HepG2 (cell line): ENCODE measurements at regions of chr1 and their contacts with region 1.

Region 1: DNA sequence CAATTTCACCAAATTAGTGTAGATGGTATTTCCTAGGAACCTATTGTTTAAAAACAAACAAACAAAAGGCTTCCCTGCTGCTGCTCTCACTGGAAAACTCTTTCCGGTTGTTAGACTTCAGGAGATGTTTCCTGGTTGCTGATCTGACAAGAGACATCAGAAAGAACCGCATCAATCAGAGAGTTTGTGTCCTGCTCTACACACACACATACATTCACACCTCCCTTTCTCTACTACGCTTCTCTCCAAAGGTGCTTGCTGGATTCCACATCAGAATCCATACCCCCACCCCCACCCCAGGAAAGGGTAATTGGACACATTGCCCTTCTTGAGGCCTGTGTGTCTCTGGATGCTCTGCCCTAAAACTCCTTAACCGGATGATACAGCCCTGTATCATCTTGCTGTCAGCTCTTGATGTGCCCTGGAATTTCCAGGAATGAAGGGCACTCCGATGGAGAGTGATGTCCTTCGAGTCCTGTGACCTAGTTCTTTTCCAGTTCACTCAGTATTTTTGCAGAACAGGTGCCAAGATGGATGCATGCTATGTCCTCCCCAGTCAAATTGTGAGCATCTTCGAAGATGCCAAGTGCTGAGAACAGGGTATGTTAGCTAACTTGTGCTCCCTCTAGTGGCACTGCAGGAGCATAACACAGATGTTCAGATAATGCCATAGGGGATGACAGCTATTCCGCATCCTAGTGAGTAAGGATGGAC is 113.7 kb upstream of the SLC35F3 start:
- DNase-seq: peak; percentile 43
- ATAC-seq: peak; percentile 92
- H3K4me3 ChIP-seq: no peak overlapping the region
- H3K27ac ChIP-seq: no peak overlapping the region
- H3K4me1 ChIP-seq: no peaks in the 10 kb centered on the region
- H3K27me3 ChIP-seq: no peaks in the 10 kb centered on the region
- CTCF ChIP-seq: peak; percentile 85
- EP300 ChIP-seq: no peak
- POLR2A ChIP-seq: no peak
- RAD21 ChIP-seq: no peak

Region 2: DNA sequence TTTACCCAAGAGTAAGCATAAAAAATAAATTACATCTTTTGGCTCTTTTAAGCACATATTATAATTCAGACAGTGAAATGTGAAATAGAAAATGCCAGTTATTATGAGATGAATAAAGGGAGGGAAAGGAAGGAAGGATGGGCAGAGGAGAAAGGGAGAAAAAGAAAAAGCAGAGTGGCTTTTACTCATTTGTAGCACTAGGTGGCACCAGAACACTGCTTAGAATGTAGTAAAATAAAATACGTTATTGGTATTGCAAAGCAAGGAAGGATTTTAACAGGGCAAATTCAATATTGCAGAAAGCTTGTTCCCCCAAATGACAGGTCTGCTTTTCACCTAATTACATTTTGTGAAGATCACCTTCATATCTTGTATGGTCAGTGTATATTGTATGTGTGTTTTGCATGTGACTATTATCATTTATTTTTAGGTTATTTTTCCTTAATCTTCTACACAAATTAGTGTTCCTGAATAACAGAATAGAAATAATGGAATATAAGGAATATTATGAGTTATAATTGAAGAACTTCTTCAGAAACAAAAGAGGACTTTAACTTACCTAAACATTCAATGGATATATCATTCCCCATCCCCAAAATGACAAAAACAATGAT is 486.2 kb before region 1 on chr1:
- CTCF ChIA-PET with region 1: no interaction called
- POLR2A ChIA-PET with region 1: no interaction called
- in situ Hi-C with region 1: no loop called
- intact Hi-C with region 1: loop called (anchors 1 kb)
- DNase-seq: no peak
- ATAC-seq: no peak
- H3K4me3 ChIP-seq: no peak overlapping the region
- H3K27ac ChIP-seq: no peak overlapping the region
- H3K4me1 ChIP-seq: no peaks in the 10 kb centered on the region
- H3K27me3 ChIP-seq: no peaks in the 10 kb centered on the region
- CTCF ChIP-seq: peak; percentile 65
- EP300 ChIP-seq: no peak
- POLR2A ChIP-seq: no peak
- RAD21 ChIP-seq: no peak

Region 3: GRCh38 chr1:233394860-233395717 is 395.7 kb before region 1 on chr1:
- CTCF ChIA-PET with region 1: no interaction called
- POLR2A ChIA-PET with region 1: no interaction called
- in situ Hi-C with region 1: no loop called
- intact Hi-C with region 1: loop called (anchors 1 kb)
- DNase-seq: peak; percentile 33
- ATAC-seq: peak; percentile 86
- H3K4me3 ChIP-seq: no peak overlapping the region
- H3K27ac ChIP-seq: no peak overlapping the region
- H3K4me1 ChIP-seq: no peaks in the 10 kb centered on the region
- H3K27me3 ChIP-seq: no peaks in the 10 kb centered on the region
- CTCF ChIP-seq: peak; percentile 73
- EP300 ChIP-seq: no peak
- POLR2A ChIP-seq: no peak
- RAD21 ChIP-seq: peak; percentile 39; the same call in 1 of the 2 replicates

Region 4: DNA sequence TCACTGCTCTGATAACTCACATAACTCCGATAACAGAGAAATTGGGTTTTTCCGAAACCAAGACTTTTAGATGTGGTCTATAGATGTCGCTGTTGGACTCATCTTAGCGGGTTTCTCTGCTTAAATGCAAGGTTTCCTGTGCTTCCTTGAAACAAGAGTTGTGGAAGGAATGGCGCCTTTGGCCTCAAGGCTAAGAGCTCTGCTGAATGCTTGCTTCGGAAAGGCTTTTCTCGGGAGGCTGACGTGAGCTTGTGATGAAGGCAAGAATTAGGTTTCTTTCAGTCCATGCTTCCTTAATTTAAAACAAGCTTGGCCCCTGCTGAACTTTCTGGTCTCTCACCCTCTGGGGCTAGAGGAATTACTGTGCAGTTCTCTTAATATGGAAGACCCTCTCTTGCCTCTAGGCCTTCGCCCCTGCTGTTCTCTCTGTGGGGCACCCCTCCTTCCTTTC is 349.8 kb before region 1 on chr1:
- CTCF ChIA-PET with region 1: interaction called, 18 read pairs
- POLR2A ChIA-PET with region 1: no interaction called
- in situ Hi-C with region 1: loop called (anchors 25 kb)
- intact Hi-C with region 1: no loop called
- DNase-seq: peak; percentile 31
- ATAC-seq: peak; percentile 51; the same call in 2 of the 3 replicates
- H3K4me3 ChIP-seq: no peak overlapping the region
- H3K27ac ChIP-seq: no peak overlapping the region
- H3K4me1 ChIP-seq: no peaks in the 10 kb centered on the region
- H3K27me3 ChIP-seq: no peaks in the 10 kb centered on the region
- CTCF ChIP-seq: peak; percentile 80
- EP300 ChIP-seq: no peak
- POLR2A ChIP-seq: no peak
- RAD21 ChIP-seq: peak; percentile 61; the same call in 1 of the 2 replicates